Ascending aorta (tissue), 2 donors: ENCODE measurements at regions of chr11 and their contacts with region 1.

Region 1: GRCh38 chr11:94871491-94872185 is 101.7 kb downstream of the CWC15 start:
- DNase-seq: no peak
- H3K4me3 ChIP-seq: no peak overlapping the region
- H3K27ac ChIP-seq: no peak overlapping the region
- H3K4me1 ChIP-seq: peaks cover 0 to 17% of the 10 kb centered on the region in 2 donors
- H3K27me3 ChIP-seq: no peaks in the 10 kb centered on the region
- CTCF ChIP-seq: no peak

Region 2: DNA sequence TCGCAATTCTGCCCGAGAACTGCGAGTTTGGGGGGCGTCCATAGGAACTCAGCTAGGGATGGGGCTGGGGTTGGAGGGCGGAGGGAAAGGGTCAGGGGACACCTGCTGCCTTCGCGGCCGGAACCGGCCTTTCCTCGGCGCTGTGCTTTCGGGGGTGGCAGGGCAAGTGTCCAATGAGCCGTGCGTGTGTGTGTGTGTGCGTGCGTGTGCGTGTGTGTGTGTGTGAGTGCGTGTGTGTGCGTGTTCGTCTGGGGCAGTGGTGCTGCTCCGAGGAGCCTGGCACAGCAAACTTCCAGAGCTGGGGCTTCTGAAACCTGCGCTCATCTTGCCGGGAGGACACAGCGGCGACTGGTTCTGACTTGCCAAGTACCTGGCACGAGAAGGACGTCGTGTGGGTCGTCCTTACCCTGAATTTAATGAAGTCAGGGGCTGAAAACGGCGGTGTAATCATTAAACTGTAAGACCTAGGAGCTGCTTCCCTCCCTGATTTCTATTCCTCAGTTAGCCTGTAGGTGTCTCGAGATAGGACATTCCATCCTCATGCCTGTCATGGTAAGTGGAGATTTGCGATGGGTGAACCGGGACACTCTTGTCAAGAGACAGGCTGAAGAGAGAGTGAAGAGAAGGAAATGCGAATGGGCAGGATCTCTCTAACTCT is 130.5 kb before region 1 on chr11:
- intact Hi-C with region 1: loop called (anchors 2 kb)
- DNase-seq: no peak
- H3K4me3 ChIP-seq: peak overlapping the region; percentile 74
- H3K27ac ChIP-seq: no peak overlapping the region
- H3K4me1 ChIP-seq: peaks cover 4 to 5% of the 10 kb centered on the region in 2 donors
- H3K27me3 ChIP-seq: no peaks in the 10 kb centered on the region
- CTCF ChIP-seq: peak; percentile 23 to 52 (median 47)